ENCODE measurements at regions of chr17 and their contacts with region 1.

Region 1: DNA sequence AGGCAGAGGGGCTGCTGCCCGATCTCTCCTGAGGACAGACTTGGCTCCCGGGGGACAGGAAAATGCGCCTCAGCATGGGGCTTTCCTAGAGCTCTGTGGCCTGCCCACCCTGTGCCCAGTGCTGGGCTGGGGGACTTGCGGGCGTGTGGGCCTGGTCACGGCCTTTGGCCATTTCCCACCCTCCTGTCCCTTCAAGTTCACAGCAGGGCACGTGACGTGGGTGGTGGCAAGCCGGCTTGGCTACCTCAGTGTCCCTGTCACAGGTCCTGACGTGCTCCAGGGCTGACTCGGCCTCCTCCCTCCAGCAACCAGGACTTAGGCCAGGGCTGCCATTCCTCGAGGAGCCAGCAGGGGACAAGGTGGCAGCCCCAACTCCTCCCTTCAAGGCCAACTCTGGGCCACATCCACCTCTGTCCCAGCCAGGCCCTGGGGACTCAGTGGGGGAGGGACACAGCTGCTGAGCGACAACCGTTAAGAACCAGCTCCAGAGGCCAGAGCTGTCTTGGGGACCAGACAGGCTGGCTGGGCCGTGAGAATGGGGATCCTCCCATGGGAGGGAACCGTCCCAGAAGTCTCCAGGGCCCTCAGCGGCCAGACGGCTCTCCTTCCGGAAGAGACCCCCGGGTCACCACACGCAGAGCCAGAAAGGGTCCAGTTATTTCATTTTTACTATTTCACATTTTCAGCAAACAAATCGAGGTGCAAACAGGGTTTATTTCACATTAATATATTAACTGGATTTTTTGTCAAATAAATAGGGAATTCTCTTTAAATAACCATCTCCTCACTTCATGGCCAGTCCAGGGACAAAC is 1.1 kb upstream of the UNC13D start:
- DNase-seq: peak; percentile 89 to 93
- H3K4me3 ChIP-seq: peak overlapping the region; percentile 40; the same call in 1 of the 2 replicates
- H3K27ac ChIP-seq: peak overlapping the region; percentile 96
- H3K4me1 ChIP-seq: peaks cover 51% of the 10 kb centered on the region
- H3K27me3 ChIP-seq: no peaks in the 10 kb centered on the region
- CTCF ChIP-seq: peak; percentile 92

Region 2: GRCh38 chr17:75549221-75550138 is 295.8 kb before region 1 on chr17:
- CTCF ChIA-PET with region 1: no interaction called
- POLR2A ChIA-PET with region 1: interaction called, 11 read pairs
- intact Hi-C with region 1: no loop called
- DNase-seq: peak; percentile 97 to 98
- H3K4me3 ChIP-seq: peak overlapping the region; percentile 51; the same call in 1 of the 2 replicates
- H3K27ac ChIP-seq: peak overlapping the region; percentile 94
- H3K4me1 ChIP-seq: peaks cover 31% of the 10 kb centered on the region
- H3K27me3 ChIP-seq: no peaks in the 10 kb centered on the region
- CTCF ChIP-seq: peak; percentile 17; the same call in 1 of the 2 replicates

Region 3: DNA sequence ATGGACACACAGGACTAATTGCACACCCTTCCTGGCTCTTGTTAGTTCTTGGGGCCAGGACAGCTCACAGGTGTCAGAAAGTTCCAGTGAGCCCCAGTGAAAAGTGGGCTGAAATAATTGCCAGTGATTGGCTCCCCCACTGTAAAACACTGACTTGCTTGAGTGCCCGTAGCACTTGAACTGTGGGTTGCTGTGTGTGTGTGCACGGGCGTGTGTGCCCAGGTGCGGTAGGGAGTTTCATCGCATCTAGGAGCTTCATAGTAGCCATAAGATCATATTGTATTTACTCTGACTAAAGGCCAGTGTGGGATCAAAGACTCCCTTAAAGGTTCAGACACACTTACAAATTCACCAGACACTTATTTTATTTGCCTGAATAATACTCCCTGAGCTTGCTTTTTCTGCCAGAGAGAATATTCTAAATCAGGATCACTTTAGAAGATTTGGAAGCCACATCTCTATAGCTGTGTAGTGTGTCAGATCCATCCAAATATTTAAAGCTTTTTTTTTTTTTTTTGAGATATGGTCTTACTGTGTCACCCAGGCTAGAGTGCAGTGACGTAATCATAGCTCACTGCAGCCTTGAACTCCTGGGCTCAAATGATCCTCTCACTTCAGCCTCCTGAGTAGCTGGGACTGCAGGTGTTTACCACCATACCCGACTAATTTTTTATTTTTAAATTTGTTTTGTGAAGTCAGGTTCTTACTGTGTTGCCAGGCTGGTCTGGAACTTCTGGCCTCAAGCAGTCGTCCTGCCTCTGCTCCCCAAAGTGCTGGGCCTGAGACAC is 49.2 kb before region 1 on chr17:
- CTCF ChIA-PET with region 1: interaction called, 13 read pairs
- POLR2A ChIA-PET with region 1: interaction called, 4 read pairs
- intact Hi-C with region 1: no loop called
- DNase-seq: no peak
- H3K4me3 ChIP-seq: no peak overlapping the region
- H3K27ac ChIP-seq: no peak overlapping the region
- H3K4me1 ChIP-seq: no peaks in the 10 kb centered on the region
- H3K27me3 ChIP-seq: no peaks in the 10 kb centered on the region
- CTCF ChIP-seq: no peak

Region 4: GRCh38 chr17:75872434-75873351 is 27.4 kb after region 1 on chr17:
- CTCF ChIA-PET with region 1: interaction called, 7 read pairs
- POLR2A ChIA-PET with region 1: interaction called, 16 read pairs
- intact Hi-C with region 1: no loop called
- DNase-seq: peak; percentile 84 to 87
- H3K4me3 ChIP-seq: no peak overlapping the region; the same call in 1 of the 2 replicates
- H3K27ac ChIP-seq: peak overlapping the region; percentile 58
- H3K4me1 ChIP-seq: peaks cover 46% of the 10 kb centered on the region
- H3K27me3 ChIP-seq: no peaks in the 10 kb centered on the region
- CTCF ChIP-seq: no peak

Region 5: GRCh38 chr17:75896415-75897159 is 51.3 kb after region 1 on chr17 and contains the start of gene TRIM65:
- CTCF ChIA-PET with region 1: interaction called, 4 read pairs
- POLR2A ChIA-PET with region 1: interaction called, 5 read pairs
- intact Hi-C with region 1: loop called (anchors 1 kb)
- DNase-seq: peak; percentile 59 to 77
- H3K4me3 ChIP-seq: peak within 1 kb of the TSS; percentile 77
- H3K27ac ChIP-seq: peak within 1 kb of the TSS; percentile 33
- H3K4me1 ChIP-seq: 0 out of 2 replicates have a peak, but pooled peaks cover 4% of the 10 kb centered on the region
- H3K27me3 ChIP-seq: no peaks in the 10 kb centered on the region
- CTCF ChIP-seq: no peak
- total RNA-seq, gene TRIM65: 21.1 and 27.1 TPM in 2 replicates

Region 6: DNA sequence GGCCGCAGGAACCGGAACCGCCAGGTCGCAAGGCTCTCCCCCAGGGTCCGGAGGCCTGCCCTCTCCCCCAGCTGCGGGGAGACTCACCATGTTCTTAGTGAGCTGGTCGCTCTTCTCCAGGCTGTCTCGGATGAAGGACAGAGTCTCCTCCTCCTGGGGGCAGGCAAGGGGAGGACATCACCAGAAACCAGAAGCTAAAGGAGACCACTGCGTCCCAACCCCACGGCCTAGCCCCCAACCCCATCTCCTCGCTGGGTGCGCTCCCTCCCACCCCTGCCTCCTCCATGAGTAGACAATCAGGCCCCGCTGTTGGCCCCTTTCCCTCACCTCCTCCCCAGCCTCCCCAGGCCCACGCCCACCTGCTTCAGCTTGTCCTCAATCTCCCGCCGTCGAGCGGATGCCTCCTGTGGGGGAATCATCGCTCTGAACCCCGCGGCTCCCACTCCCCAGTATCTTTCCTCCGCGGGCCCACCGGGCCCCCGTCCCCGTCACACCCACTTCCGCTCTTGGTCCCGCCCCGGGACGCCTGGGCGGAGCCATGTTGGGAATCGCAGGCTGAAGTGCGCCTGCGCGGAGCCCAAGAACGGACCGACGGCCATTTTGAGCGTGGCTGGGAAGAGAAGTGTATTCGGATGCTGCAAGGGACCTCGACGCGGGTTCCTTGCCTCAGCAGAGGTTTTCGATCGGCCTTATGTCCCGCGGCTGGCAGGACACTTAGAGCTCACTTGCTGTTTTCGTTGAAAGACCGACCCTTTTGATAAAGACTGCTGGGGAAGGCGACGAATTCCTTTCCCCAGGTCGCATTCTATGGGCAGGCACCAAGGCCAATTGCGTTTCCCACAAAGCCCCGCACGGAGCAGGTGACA is 258.3 kb after region 1 on chr17 and contains the start of gene EXOC7:
- CTCF ChIA-PET with region 1: no interaction called
- POLR2A ChIA-PET with region 1: interaction called, 12 read pairs
- intact Hi-C with region 1: no loop called
- DNase-seq: peak; percentile 69 to 92
- H3K4me3 ChIP-seq: peak within 1 kb of the TSS; percentile 86
- H3K27ac ChIP-seq: peak within 1 kb of the TSS; percentile 73
- H3K4me1 ChIP-seq: peaks cover 7% of the 10 kb centered on the region
- H3K27me3 ChIP-seq: no peaks in the 10 kb centered on the region
- CTCF ChIP-seq: no peak; the same call in 1 of the 2 replicates
- total RNA-seq, gene EXOC7: 118 and 131 TPM in 2 replicates

Measured in PC-9 (cell line).